SK-N-SH (cell line): ENCODE measurements at regions of chr9 and their contacts with region 1.

Region 1: DNA sequence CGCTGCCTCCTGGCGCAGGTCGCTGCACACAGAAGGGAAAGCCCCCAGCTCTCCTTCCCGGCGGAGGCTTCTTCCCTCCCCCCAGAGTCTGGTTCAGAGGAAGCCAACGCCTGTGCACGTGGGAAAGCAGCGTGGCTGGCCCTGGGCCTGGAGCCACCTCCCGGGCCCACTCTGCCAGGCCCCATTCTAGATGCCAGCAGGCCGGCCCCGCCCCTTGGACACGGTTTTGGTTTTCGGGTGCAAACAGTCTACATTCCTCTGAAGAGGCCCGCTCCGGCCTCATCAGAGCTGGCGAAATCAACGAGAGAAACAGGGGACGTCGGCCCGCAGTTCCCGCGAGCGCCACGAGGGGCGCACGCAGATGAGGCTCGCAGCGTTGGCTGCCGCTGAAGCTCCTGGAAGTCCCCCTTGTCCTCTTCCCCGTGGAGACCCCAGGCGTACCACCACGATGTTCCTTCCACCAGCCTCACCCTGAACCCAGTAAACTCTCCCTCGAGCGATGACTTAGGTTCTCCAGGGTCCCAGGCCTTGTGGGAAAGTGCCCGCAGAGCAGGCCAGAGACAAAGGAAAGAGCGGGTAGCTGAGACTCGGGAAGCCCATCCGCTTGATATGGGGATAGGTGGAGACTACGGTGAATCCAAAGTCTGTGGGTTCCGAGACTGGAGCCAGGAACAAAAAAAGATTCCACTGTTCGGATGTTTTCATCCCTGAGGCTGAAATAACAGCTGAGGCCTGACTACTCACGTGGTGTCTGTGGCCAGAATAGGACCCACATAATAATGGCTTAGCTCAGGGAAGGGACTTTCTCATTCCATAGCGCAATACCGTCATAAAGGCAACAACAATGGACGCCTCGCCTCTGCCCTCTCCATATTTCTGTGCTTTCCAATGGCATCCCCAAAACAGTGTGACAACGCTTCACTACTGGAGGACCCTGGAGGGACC is 64.2 kb downstream of the KLF4 start:
- DNase-seq: peak; percentile 74
- H3K4me3 ChIP-seq: peak overlapping the region in 1 of 2 experiments; percentile 39; a peak in 1 of 4 replicates
- H3K27ac ChIP-seq: no peak overlapping the region
- H3K4me1 ChIP-seq: peaks cover 0 to 2% of the 10 kb centered on the region in 2 experiments; a peak in 1 of 4 replicates
- H3K27me3 ChIP-seq: no peaks in the 10 kb centered on the region
- CTCF ChIP-seq: peak; percentile 81
- EP300 ChIP-seq: no peak
- RAD21 ChIP-seq: peak; percentile 39; the same call in 1 of the 2 replicates

Region 2: DNA sequence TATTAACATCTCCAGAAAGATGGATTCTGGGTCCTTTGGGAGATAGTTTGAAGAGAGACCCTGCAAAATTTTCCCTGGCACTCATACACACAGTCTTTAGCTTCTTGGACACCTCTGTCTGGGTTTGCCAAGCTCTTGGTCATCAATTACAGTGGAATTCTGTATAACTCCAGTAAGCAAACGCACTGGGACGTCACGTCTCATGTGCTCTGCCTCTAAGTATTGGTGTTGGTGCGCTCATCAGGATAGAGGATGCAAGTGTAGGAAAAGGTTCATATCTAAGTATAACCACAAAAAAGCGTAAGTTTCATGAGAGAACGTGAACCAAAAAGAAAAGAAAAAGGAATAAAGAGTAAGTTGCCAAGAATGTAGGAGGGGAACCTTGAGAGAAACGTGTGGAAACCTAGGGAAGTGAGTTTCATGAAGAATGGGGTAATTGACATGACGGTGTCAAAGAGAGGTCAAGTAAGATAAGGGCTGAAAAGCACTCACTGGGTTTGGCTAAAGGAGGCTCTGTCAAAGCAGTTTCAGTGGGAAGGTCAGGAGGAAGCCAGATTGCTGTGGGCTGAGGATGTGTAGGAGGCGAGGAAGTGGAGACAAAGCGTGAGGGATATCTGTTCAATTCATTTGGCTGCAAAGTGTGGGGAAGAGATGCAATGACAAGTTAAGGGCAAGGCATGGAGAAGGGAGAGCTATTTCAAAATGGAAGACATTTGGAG is 49.6 kb before region 1 on chr9:
- CTCF ChIA-PET with region 1: no interaction called
- POLR2A ChIA-PET with region 1: no interaction called
- DNase-seq: no peak
- H3K4me3 ChIP-seq: no peak overlapping the region
- H3K27ac ChIP-seq: no peak overlapping the region
- H3K4me1 ChIP-seq: no peaks in the 10 kb centered on the region
- H3K27me3 ChIP-seq: no peaks in the 10 kb centered on the region
- CTCF ChIP-seq: no peak
- EP300 ChIP-seq: no peak
- RAD21 ChIP-seq: no peak

Region 3: GRCh38 chr9:107386396-107386795 is 39.0 kb before region 1 on chr9:
- CTCF ChIA-PET with region 1: interaction called, 10 read pairs
- POLR2A ChIA-PET with region 1: no interaction called
- DNase-seq: no peak
- H3K4me3 ChIP-seq: no peak overlapping the region
- H3K27ac ChIP-seq: no peak overlapping the region
- H3K4me1 ChIP-seq: no peaks in the 10 kb centered on the region
- H3K27me3 ChIP-seq: no peaks in the 10 kb centered on the region; the same call in 1 of the 2 replicates
- CTCF ChIP-seq: no peak
- EP300 ChIP-seq: no peak
- RAD21 ChIP-seq: no peak

Region 4: DNA sequence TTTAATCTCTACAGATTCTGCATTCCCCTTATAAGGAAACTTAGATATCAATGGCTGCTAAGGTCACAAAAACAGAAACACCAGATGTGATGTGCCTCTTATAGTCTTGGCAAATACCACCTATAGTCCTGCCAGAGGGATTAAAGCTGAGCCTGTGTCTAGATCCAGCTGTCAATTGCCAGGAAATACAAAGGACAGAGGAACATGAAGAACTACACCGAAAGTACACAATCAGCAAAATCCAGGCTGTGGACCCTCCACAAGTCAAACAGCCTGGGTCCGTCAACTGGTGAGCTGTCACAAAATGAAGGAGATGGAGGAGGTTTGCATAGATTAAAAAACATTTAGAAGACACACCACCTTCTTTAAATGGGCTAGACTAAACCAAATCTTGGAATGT is 21.2 kb before region 1 on chr9:
- CTCF ChIA-PET with region 1: interaction called, 18 read pairs
- POLR2A ChIA-PET with region 1: no interaction called
- DNase-seq: no peak
- H3K4me3 ChIP-seq: no peak overlapping the region
- H3K27ac ChIP-seq: no peak overlapping the region
- H3K4me1 ChIP-seq: no peaks in the 10 kb centered on the region; a peak in 1 of 4 replicates
- H3K27me3 ChIP-seq: no peaks in the 10 kb centered on the region; the same call in 1 of the 2 replicates
- CTCF ChIP-seq: no peak
- EP300 ChIP-seq: no peak
- RAD21 ChIP-seq: no peak

Region 5: DNA sequence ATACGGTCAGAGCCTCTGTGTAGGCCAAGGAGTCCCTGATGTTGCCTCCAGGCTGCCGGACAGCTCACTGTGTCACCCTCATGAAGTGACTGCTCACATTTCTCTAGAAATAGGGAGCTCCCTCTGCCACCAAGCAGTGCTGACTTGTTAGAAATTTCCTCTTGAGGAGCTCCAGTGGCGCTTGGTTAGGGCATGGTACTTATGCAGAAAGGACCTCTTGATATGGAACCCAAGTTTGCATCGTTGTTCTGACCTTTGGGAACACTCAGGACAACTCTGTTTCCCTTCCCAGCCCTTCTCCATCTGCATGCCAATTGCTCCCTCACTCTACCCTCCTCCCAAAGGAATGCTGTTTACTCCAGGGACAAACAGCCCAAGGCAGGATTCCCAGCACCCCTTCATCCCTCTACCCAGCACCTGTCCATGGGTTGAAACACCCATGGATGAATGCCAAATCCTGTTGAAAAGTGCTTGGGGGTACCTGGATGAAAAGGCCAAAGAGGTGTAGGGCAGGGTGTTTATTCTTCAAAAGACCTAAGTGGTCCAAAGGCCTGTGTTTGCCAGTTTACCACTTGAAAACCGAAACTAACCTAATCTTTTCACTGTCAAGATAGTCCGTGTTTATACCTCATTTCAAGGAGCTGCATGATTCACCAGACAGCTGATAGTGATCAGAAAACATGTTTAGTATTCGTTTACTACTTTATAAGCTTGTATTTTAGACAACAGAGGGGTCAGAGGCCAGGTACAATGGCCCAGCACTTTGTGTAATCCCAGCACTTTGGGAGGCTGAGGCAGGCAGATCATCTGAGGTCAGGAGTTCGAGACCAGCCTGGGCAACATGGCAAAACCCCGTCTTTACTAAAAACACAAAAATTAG is 13.1 kb after region 1 on chr9:
- CTCF ChIA-PET with region 1: interaction called, 36 read pairs
- POLR2A ChIA-PET with region 1: no interaction called
- DNase-seq: no peak
- H3K4me3 ChIP-seq: no peak overlapping the region
- H3K27ac ChIP-seq: no peak overlapping the region
- H3K4me1 ChIP-seq: no peaks in the 10 kb centered on the region
- H3K27me3 ChIP-seq: peaks cover 8% of the 10 kb centered on the region; the same call in 1 of the 2 replicates
- CTCF ChIP-seq: no peak
- EP300 ChIP-seq: no peak
- RAD21 ChIP-seq: no peak

Region 6: GRCh38 chr9:107489687-107490605 is 64.6 kb after region 1 on chr9 and contains the start of gene KLF4:
- CTCF ChIA-PET with region 1: interaction called, 13 read pairs
- POLR2A ChIA-PET with region 1: no interaction called
- DNase-seq: peak; percentile 86
- H3K4me3 ChIP-seq: peak within 1 kb of the TSS; percentile 43 to 71
- H3K27ac ChIP-seq: peak within 1 kb of the TSS in 1 of 2 experiments; percentile 48; a peak in 1 of 4 replicates
- H3K4me1 ChIP-seq: peaks cover 0 to 4% of the 10 kb centered on the region in 2 experiments; a peak in 1 of 4 replicates
- H3K27me3 ChIP-seq: peaks cover 67% of the 10 kb centered on the region
- CTCF ChIP-seq: no peak
- EP300 ChIP-seq: no peak
- RAD21 ChIP-seq: no peak
- polyA plus RNA-seq, gene KLF4: 5.3 and 7.2 TPM in 2 replicates